A549 (cell line): ENCODE measurements at regions of chr19 and their contacts with region 1.

Region 1: DNA sequence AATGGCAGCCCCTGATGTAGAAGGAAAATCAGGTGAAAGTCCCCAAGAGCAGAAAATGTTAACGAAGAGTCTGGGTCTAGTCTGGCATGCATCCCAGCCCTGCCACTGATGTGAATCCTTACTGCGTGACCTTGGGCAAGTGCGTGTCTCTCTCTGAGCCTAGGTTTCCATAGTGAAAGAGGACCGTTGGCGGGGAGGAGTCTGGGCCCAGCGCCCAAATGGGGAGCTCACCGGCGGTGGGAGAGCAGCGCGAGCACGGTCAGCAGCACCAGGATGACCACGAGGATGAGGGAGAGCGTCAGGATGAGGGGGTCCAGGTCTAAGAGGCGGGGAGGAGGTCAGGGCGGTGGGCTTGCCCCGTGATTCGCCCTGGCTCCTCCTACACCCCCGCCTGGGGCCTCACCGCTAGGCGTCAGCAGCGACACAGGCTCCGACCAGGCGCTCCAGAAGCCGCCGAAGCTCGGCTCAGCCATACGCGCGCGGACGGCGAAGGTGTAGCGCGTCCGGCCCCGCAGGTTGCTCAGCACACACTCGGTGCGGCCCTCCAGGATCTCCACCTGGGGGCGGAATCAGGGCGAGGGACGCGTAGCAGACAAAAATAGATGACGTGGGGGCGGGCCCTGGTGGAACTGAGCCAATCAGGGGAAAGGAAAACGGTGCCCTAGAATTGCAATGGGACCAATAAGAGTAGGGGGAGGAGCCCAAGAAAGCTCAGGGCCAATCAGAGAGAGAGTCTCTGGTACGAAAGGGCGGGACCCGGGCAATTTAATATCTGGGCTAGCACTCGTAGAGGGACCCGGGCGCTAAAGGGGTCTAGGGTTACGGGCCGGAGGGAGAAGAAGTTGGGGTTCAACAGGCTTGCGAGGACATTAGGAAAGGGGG is 3.2 kb downstream of the EPOR start:
- DNase-seq: peak; percentile 96 to 98
- ATAC-seq: peak; percentile 73 to 84
- H3K4me3 ChIP-seq: peak overlapping the region; percentile 51
- H3K27ac ChIP-seq: peak overlapping the region; percentile 76 to 91
- H3K4me1 ChIP-seq: peaks cover 41% of the 10 kb centered on the region
- CTCF ChIP-seq: peak; percentile 51
- EP300 ChIP-seq: no peak
- POLR2A ChIP-seq: peak; percentile 69
- RAD21 ChIP-seq: peak; percentile 42 to 43; a peak in 3 of 5 replicates

Region 2: GRCh38 chr19:11293433-11294389 is 87.2 kb before region 1 on chr19:
- CTCF ChIA-PET with region 1: interaction called, 28 read pairs
- POLR2A ChIA-PET with region 1: interaction called, 11 read pairs
- DNase-seq: peak; percentile 79 to 93
- ATAC-seq: peak; percentile 99
- H3K4me3 ChIP-seq: peak overlapping the region; percentile 39
- H3K27ac ChIP-seq: peak overlapping the region; percentile 78 to 79
- H3K4me1 ChIP-seq: peaks cover 10% of the 10 kb centered on the region; the same call in 1 of the 3 replicates
- CTCF ChIP-seq: peak; percentile 84
- EP300 ChIP-seq: no peak
- POLR2A ChIP-seq: peak; percentile 55
- RAD21 ChIP-seq: peak; percentile 90 to 96

Region 3: GRCh38 chr19:11346092-11346940 is 34.6 kb before region 1 on chr19 and contains the starts of genes CCDC159 and TMEM205:
- CTCF ChIA-PET with region 1: interaction called, 31 read pairs
- POLR2A ChIA-PET with region 1: interaction called, 18 read pairs
- DNase-seq: peak; percentile 89 to 97
- ATAC-seq: peak; percentile 82 to 91
- H3K4me3 ChIP-seq: peak within 1 kb of the TSS; percentile 90
- H3K27ac ChIP-seq: peak within 1 kb of the TSS; percentile 79 to 98
- H3K4me1 ChIP-seq: peaks cover 28% of the 10 kb centered on the region
- CTCF ChIP-seq: no peak
- EP300 ChIP-seq: no peak
- POLR2A ChIP-seq: peak; percentile 72
- RAD21 ChIP-seq: no peak
- polyA plus RNA-seq, gene CCDC159: 11.3 and 12.2 TPM in 2 replicates
- polyA plus RNA-seq, gene TMEM205: 183 and 230 TPM in 2 replicates

Region 4: GRCh38 chr19:11399667-11400066 is 18.8 kb after region 1 on chr19:
- CTCF ChIA-PET with region 1: interaction called, 26 read pairs
- POLR2A ChIA-PET with region 1: no interaction called
- DNase-seq: no peak
- ATAC-seq: no peak
- H3K4me3 ChIP-seq: no peak overlapping the region
- H3K27ac ChIP-seq: no peak overlapping the region
- H3K4me1 ChIP-seq: no peaks in the 10 kb centered on the region
- CTCF ChIP-seq: no peak
- EP300 ChIP-seq: no peak
- POLR2A ChIP-seq: no peak
- RAD21 ChIP-seq: no peak

Region 5: GRCh38 chr19:11435058-11435832 is 54.4 kb after region 1 on chr19 and contains the starts of genes ODAD3 and PRKCSH:
- CTCF ChIA-PET with region 1: interaction called, 34 read pairs
- POLR2A ChIA-PET with region 1: interaction called, 9 read pairs
- DNase-seq: peak; percentile 91 to 99
- ATAC-seq: peak; percentile 98 to 99
- H3K4me3 ChIP-seq: peak within 1 kb of the TSS; percentile 84
- H3K27ac ChIP-seq: peak within 1 kb of the TSS; percentile 86 to 90
- H3K4me1 ChIP-seq: peaks cover 13% of the 10 kb centered on the region; the same call in 2 of the 3 replicates
- CTCF ChIP-seq: peak; percentile 54
- EP300 ChIP-seq: no peak
- POLR2A ChIP-seq: peak; percentile 75
- RAD21 ChIP-seq: peak in 1 of 2 experiments; percentile 16; a peak in 1 of 5 replicates
- polyA plus RNA-seq, gene ODAD3: 0.46 and 0.70 TPM in 2 replicates
- polyA plus RNA-seq, gene PRKCSH: 75.0 and 102 TPM in 2 replicates

Region 6: GRCh38 chr19:11482384-11483050 is 101.6 kb after region 1 on chr19:
- CTCF ChIA-PET with region 1: interaction called, 50 read pairs
- POLR2A ChIA-PET with region 1: interaction called, 10 read pairs
- DNase-seq: peak; percentile 75 to 84
- ATAC-seq: peak; percentile 69 to 86
- H3K4me3 ChIP-seq: peak overlapping the region; percentile 64
- H3K27ac ChIP-seq: peak overlapping the region; percentile 81 to 91
- H3K4me1 ChIP-seq: 0 out of 3 replicates have a peak, but pooled peaks cover 3% of the 10 kb centered on the region
- CTCF ChIP-seq: peak; percentile 84
- EP300 ChIP-seq: no peak
- POLR2A ChIP-seq: no peak
- RAD21 ChIP-seq: peak; percentile 64 to 87; a peak in 4 of 5 replicates